ENCODE measurements at regions of chr22 and their contacts with region 1.

Region 1: DNA sequence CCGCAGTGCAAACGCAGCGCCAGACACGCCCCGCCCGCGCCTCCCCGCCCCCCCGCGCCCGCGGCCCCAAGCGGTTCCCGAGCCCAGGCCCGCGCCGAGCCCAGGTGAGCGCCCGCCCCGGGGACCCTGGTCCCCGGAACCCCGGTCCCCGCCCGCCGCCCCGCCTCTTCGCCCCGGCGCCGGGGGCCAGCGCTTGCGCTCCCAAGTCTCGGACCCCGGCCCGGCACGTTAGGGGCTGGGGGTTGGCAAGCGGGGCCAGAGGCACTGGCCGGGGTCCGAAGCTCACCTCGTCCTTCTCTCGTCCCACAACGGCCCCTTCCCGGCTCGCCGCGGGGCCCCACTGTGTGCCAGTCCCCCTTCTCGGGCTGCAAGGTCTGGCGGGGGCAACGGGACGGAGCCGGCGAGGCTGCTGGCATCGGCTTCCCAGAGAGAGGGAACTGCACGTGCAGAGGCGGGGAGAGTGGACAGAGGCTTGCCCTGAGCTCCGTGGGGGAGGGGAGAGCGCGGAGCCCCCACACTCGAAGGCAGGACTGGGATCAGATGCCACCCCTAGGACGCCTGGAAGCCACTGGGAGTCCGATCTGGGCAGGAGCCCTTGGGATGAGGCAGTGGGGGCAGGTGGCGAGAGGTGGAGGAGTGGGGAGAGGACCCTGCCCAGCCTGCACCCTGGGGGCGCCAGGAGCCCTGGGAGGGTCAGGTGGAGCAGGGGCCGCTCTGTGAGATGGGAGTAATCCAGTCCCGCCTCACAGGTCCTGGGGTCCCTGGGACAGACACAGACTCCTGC is 1.8 kb upstream of the AIFM3 start:
- DNase-seq: peak in 1 of 5 donors; percentile 62
- ATAC-seq: no peak
- H3K4me3 ChIP-seq: peak overlapping the region in 11 of 12 donors; percentile 17 to 55 (median 43)
- H3K27ac ChIP-seq: no peak overlapping the region
- H3K4me1 ChIP-seq: peaks cover 0 to 21% (median 5%) of the 10 kb centered on the region in 12 donors
- H3K27me3 ChIP-seq: peaks cover 0 to 29% (median 11%) of the 10 kb centered on the region in 9 donors
- CTCF ChIP-seq: no peak
- POLR2A ChIP-seq: no peak

Region 2: GRCh38 chr22:20816559-20816958 is 148.7 kb before region 1 on chr22:
- intact Hi-C with region 1: no loop called
- DNase-seq: no peak
- ATAC-seq: no peak
- H3K4me3 ChIP-seq: no peak overlapping the region
- H3K27ac ChIP-seq: no peak overlapping the region
- H3K4me1 ChIP-seq: no peaks in the 10 kb centered on the region
- H3K27me3 ChIP-seq: no peaks in the 10 kb centered on the region
- CTCF ChIP-seq: no peak
- POLR2A ChIP-seq: no peak

Region 3: DNA sequence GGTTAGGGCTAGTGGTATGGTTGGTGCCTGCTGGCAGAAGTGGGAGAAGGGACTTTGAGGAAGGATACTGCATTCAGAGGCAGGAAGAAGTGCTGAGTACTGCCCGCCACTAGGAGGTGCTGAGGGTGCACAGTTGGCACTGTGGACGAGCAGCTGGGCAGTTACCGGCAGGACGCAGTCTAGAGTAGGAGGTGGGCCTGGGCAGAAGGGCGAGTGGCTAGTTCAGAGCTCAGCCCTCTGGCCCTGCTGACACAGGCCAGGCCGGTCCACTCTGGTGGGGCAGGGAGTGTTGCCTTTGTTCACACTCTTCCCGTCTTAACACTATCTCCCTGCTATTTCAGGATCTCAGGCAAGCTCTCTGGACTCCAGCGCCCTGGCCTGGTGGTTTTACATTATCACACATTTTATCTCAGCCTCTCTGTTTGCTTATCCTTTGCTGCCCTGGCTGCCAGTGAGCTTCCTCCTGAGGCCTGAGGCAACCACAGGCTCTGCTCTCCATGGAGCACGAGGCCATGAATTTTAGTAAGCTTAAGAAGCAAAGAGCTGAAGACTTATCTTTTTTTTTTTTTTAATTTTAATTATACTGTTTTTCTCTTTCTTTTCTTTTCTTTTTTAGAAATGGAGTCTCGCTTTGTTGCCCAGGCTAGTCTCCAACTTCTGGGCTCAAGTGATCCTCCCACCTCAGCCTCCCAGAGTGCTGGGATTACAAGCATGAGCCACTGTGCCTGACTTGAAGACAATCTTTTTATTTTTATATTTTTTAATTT is 79.6 kb before region 1 on chr22:
- intact Hi-C with region 1: loop called in 2 of 10 experiments (anchors 10 kb)
- DNase-seq: peak; percentile 74 to 86 (median 81)
- ATAC-seq: peak; percentile 91 to 98 (median 97)
- H3K4me3 ChIP-seq: no peak overlapping the region
- H3K27ac ChIP-seq: peak overlapping the region; percentile 24 to 76 (median 72)
- H3K4me1 ChIP-seq: peaks cover 0 to 25% (median 11%) of the 10 kb centered on the region in 12 donors
- H3K27me3 ChIP-seq: no peaks in the 10 kb centered on the region
- CTCF ChIP-seq: peak; percentile 63 to 89 (median 77)
- POLR2A ChIP-seq: no peak

Region 4: DNA sequence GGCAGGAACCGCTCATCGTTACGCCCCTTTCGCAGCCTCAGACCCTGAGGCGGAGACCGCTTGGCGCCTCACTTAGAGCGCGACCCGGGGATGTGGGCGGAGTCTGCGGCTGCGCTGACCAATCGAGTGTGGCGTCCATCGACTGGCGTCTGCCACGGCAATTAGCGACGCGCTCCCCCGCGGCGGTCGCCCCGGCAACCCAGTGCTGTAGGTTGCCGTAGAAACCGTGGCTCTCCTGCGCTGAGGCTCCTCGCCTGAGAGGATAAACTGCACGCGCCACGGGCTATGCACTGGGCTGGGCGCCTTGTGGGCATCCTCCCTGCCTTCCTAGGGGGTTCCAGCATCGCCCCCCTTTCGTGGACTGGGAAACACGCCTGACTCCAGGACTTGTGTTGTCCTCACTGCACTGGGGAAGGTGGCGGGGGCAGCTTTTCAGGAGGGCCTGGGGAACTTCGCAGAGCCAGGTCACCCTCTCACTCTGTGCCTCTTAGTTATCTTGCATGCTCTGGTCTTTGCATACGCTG is 49.0 kb after region 1 on chr22:
- intact Hi-C with region 1: loop called in 1 of 10 experiments (anchors 10 kb)
- DNase-seq: peak; percentile 92 to 94 (median 92)
- ATAC-seq: peak; percentile 83 to 94 (median 90)
- H3K4me3 ChIP-seq: peak overlapping the region in 11 of 12 donors; percentile 18 to 64 (median 55)
- H3K27ac ChIP-seq: peak overlapping the region in 10 of 12 donors; percentile 39 to 84 (median 68)
- H3K4me1 ChIP-seq: peaks cover 3 to 27% (median 20%) of the 10 kb centered on the region in 12 donors
- H3K27me3 ChIP-seq: no peaks in the 10 kb centered on the region
- CTCF ChIP-seq: no peak
- POLR2A ChIP-seq: peak in 1 of 2 donors; percentile 29

Region 5: DNA sequence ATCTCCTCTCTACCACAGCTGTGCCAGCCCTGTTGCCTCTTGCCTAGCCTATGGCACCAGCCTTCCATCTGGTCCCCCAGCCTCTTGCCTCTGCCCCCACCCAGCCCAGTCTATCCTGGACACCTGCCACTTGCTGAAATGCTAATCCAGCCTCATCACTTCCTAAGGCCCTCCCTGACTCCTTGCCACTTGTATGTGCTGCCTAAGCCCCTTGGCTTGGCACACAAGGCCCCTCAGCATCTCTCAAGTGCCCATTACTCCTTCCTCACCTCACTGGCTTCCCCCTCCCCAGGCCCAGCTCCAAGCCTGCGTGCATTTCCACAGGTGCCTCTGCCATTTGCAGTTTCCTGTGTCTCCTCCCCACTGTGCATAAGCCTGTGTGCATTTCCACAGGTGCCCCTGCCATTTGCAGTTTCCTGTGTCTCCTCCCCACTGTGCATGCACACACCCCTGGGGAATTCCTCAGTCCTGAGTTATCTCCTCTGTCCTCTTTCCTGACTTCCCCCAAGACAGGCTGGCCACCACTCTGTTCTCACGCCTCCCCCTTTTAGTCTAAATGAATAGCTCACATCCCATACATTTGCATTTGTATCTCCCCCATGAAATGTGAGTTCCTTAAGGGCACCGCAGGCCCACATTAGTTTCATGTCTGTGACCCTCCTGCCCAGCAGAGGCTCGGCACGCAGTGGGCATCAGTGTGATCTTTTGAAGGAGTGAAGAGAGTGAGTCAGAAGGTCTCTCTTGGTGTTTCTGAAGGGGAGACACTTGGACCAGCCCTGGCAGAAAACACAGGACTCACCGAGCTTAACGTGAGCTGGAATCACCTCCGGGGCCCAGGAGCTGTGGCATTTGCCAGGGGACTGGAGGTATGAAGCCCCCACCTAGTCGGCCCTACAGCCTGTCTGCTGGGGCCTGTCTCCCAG is 86.5 kb after region 1 on chr22:
- intact Hi-C with region 1: loop called in 1 of 10 experiments (anchors 5 kb)
- DNase-seq: peak in 1 of 5 donors; percentile 18
- ATAC-seq: no peak
- H3K4me3 ChIP-seq: no peak overlapping the region
- H3K27ac ChIP-seq: no peak overlapping the region
- H3K4me1 ChIP-seq: peaks cover 0 to 6% (median 0%) of the 10 kb centered on the region in 12 donors
- H3K27me3 ChIP-seq: peaks cover 0 to 5% (median 0%) of the 10 kb centered on the region in 9 donors
- CTCF ChIP-seq: no peak
- POLR2A ChIP-seq: no peak

Region 6: DNA sequence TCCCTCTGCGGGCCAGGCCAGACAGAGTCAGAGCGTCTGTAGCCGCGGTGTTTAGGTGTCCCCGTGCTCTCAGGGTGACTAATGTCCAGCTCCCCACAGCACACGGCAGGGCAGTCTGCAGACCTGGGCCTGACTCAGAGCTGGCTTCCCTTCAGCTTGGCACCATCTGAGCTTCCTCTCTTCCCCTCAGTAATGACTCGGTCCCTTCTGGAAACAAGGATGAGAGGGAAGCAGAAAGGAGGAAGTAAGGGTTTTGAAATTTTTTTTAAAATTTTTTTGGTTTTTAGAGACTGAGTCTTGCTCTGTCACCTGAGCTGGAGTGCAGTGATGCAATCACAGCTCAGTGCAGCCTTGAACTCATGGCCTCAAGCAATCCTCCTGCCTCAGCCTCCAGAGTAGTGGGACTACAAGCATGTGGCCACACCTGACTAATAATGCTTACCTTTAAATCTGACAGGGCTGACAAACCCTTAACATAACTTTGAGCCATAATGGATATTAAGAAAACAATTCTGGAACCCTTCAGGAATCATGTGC is 109.0 kb after region 1 on chr22:
- intact Hi-C with region 1: loop called in 1 of 10 experiments (anchors 10 kb)
- DNase-seq: no peak
- ATAC-seq: peak in 1 of 4 donors; percentile 45
- H3K4me3 ChIP-seq: no peak overlapping the region
- H3K27ac ChIP-seq: no peak overlapping the region
- H3K4me1 ChIP-seq: no peaks in the 10 kb centered on the region
- H3K27me3 ChIP-seq: peaks cover 0 to 6% (median 0%) of the 10 kb centered on the region in 9 donors
- CTCF ChIP-seq: no peak
- POLR2A ChIP-seq: no peak

Measured in heart left ventricle (tissue), 16 donors.